Esophagus muscularis mucosa (tissue), 4 donors: ENCODE measurements at regions of chr11 and their contacts with region 1.

Region 1: DNA sequence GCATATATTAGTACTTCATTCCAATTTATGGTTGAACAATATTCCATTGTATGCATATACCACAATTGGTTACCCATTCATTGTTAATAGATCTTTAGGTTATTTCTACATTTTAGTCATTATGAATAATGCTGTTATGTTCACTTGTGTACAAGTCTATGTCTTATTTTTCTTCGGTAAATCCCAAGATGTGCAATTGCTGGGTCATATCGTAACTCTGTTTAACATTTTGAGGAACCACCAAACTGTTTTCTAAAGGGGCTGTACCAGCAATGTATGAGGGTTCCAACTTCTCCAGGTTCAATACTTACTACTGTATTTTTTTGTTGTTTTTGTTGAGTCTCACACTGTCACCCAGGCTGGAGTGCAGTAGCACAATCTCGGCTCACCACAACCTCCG is 33.1 kb downstream of the NUP98 start:
- DNase-seq: no peak
- H3K4me3 ChIP-seq: no peak overlapping the region
- H3K27ac ChIP-seq: no peak overlapping the region
- H3K4me1 ChIP-seq: no peaks in the 10 kb centered on the region
- H3K27me3 ChIP-seq: no peaks in the 10 kb centered on the region
- CTCF ChIP-seq: no peak
- EP300 ChIP-seq: no peak
- POLR2A ChIP-seq: no peak

Region 2: GRCh38 chr11:3700410-3700809 is 63.9 kb before region 1 on chr11:
- intact Hi-C with region 1: no loop called
- DNase-seq: peak; percentile 17
- H3K4me3 ChIP-seq: no peak overlapping the region
- H3K27ac ChIP-seq: no peak overlapping the region
- H3K4me1 ChIP-seq: no peaks in the 10 kb centered on the region
- H3K27me3 ChIP-seq: no peaks in the 10 kb centered on the region
- CTCF ChIP-seq: no peak
- EP300 ChIP-seq: no peak
- POLR2A ChIP-seq: no peak

Region 3: DNA sequence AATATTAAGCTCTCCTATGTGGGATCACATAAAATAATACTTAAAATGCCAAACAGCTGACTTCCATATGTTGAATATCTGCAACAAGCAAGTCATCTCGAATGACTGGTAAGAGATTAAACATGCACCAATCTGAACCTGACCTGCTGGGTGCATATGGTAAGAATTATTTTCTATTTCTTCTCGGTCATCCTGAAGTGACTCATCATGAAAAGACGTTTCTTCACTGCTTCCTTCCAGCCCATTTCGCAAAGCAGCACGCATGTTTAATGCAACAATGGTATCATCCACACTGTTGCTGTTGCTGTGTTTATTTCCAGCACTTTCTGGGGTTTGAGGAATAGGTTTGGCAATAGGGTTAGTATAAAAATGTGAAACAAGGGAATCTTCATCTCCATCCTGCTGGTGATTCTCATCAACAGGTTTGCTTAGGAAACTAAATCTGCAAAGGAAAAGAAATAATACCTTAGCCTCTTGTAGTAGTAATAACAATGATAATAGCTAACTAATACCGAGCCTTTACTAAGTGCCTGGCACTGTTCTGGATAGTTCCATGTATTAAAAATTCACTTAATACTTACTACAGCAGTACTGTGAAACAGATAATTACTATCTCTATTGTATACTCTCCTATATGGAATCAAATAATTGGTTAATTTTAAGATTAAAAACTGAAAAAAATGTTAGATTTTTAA is 41.1 kb before region 1 on chr11:
- intact Hi-C with region 1: loop called (anchors 5 kb)
- DNase-seq: no peak
- H3K4me3 ChIP-seq: no peak overlapping the region
- H3K27ac ChIP-seq: no peak overlapping the region
- H3K4me1 ChIP-seq: no peaks in the 10 kb centered on the region
- H3K27me3 ChIP-seq: no peaks in the 10 kb centered on the region
- CTCF ChIP-seq: no peak
- EP300 ChIP-seq: no peak
- POLR2A ChIP-seq: no peak